CD8-positive, alpha-beta T cell (primary cell): ENCODE measurements at regions of chr4 and their contacts with region 1.

Region 1: DNA sequence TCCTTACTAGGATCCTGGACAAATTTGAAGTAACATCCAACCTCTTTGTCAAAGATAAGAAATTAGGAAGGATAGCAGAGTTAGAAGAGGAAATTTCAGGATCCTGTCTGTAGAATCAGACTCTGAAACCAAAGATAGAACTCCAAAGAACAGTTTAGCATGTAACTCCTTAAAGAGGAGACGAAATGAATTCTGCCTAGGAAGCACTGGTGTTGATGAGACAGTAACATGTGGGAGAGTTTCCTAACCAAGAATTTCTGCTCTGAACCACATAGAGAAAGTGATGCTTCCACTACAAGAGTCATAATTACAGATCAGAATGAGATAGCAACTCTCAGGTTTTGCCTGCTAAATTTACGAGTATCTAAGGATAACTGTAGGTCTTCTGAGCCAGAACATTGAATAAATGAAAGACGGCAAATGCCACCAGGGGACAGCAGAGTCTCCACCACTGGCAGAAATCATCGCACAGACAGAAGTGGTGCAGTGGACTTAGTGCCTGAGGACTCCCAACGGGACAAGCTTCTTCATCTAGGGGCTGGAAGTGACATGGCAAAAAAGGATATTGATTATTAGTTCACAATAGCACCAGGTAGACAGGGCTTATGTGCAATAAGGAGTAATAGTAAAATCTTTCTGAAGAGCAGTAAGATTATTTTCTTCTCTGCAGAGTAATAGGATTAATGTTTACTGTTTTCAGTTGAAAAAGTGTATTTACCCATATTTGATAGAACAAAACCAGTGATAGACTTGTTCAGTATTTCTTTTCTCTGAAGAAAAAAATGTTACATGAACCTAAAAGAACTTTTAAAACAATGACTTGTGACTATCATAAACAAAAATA is 6.7 kb upstream of the PPID start:
- DNase-seq: peak; percentile 22 to 74 (median 51)
- ATAC-seq: peak; percentile 80
- H3K4me3 ChIP-seq: no peak overlapping the region
- H3K4me3 Mint-ChIP-seq: no peak overlapping the region
- H3K27ac ChIP-seq: no peak overlapping the region
- H3K27ac Mint-ChIP-seq: no peak overlapping the region
- H3K4me1 ChIP-seq: no peaks in the 10 kb centered on the region
- H3K4me1 Mint-ChIP-seq: peaks cover 2% of the 10 kb centered on the region
- H3K27me3 ChIP-seq: peaks cover 0 to 5% of the 10 kb centered on the region in 2 experiments
- H3K27me3 Mint-ChIP-seq: peaks cover 37% of the 10 kb centered on the region
- CTCF ChIP-seq: peak; percentile 72

Region 2: GRCh38 chr4:158845311-158846041 is 115.5 kb after region 1 on chr4:
- CTCF ChIA-PET with region 1: interaction called, 15 read pairs
- POLR2A ChIA-PET with region 1: no interaction called
- intact Hi-C with region 1: loop called in 1 of 2 experiments (anchors 1 kb)
- DNase-seq: no peak
- ATAC-seq: no peak
- H3K4me3 ChIP-seq: no peak overlapping the region
- H3K4me3 Mint-ChIP-seq: no peak overlapping the region
- H3K27ac ChIP-seq: no peak overlapping the region
- H3K27ac Mint-ChIP-seq: no peak overlapping the region
- H3K4me1 ChIP-seq: no peaks in the 10 kb centered on the region
- H3K4me1 Mint-ChIP-seq: peaks cover 2% of the 10 kb centered on the region
- H3K27me3 ChIP-seq: no peaks in the 10 kb centered on the region
- H3K27me3 Mint-ChIP-seq: no peaks in the 10 kb centered on the region
- CTCF ChIP-seq: no peak

Region 3: GRCh38 chr4:158850800-158851644 is 121.1 kb after region 1 on chr4:
- CTCF ChIA-PET with region 1: interaction called, 15 read pairs
- POLR2A ChIA-PET with region 1: no interaction called
- intact Hi-C with region 1: loop called (anchors 1 kb)
- DNase-seq: peak in 2 of 9 experiments; percentile 38 to 55
- ATAC-seq: peak; percentile 38
- H3K4me3 ChIP-seq: no peak overlapping the region
- H3K4me3 Mint-ChIP-seq: no peak overlapping the region
- H3K27ac ChIP-seq: no peak overlapping the region
- H3K27ac Mint-ChIP-seq: no peak overlapping the region
- H3K4me1 ChIP-seq: no peaks in the 10 kb centered on the region
- H3K4me1 Mint-ChIP-seq: peaks cover 5% of the 10 kb centered on the region
- H3K27me3 ChIP-seq: no peaks in the 10 kb centered on the region
- H3K27me3 Mint-ChIP-seq: no peaks in the 10 kb centered on the region
- CTCF ChIP-seq: peak; percentile 74

Region 4: DNA sequence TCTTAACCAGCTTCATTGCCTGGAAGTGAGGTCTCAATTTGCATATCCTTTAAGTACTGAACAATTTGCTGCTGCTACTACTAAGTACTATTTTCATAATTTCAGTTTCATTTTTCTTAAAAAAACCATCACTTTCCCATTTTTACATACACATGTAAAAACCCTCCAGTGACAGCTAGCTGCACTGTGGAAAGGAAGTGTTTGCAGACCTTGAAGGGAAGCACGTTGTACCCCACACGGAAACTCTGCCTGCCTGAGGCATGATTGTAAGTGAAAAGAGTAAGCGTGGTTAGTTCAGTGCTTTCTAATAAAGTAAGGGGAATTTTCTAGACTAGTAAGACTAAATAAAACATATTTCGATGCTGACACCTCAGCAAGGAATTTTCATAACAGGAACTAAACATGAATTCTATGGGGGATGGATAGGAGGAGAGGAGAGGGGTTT is 476.5 kb after region 1 on chr4:
- CTCF ChIA-PET with region 1: interaction called, 3 read pairs
- POLR2A ChIA-PET with region 1: no interaction called
- intact Hi-C with region 1: loop called (anchors 1 to 2 kb)
- DNase-seq: peak in 1 of 9 experiments; percentile 41
- ATAC-seq: peak; percentile 36
- H3K4me3 ChIP-seq: no peak overlapping the region
- H3K4me3 Mint-ChIP-seq: no peak overlapping the region
- H3K27ac ChIP-seq: no peak overlapping the region
- H3K27ac Mint-ChIP-seq: no peak overlapping the region
- H3K4me1 ChIP-seq: no peaks in the 10 kb centered on the region
- H3K4me1 Mint-ChIP-seq: peaks cover 18% of the 10 kb centered on the region
- H3K27me3 ChIP-seq: no peaks in the 10 kb centered on the region
- H3K27me3 Mint-ChIP-seq: no peaks in the 10 kb centered on the region
- CTCF ChIP-seq: no peak

Region 5: DNA sequence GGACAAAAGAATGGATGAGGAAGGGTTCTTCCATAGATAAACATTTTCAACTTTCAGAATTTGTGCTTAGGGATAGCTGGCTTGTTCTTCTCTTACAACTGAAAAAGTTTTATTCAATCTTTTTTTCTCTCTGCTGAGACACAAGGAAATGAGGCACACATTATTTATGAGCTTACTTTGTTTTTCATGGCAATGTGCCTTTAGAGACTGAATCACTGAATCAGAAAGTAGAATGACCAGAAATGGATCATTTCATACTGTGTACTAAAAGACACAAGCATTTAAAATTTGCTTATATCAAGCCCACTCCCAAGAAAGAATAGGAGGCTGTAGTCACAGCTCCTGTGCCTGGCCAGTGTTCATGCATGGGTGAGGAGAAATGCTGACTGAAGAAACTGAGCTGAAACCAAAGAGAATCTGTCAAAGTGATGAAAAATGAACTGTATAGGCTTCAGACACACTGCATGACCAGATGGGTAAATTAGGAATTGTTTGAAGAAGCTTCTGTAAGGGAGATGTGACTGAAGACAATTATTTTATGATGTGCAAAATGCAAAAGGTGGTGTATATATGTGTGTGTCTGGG is 786.7 kb after region 1 on chr4:
- CTCF ChIA-PET with region 1: no interaction called
- POLR2A ChIA-PET with region 1: no interaction called
- intact Hi-C with region 1: no loop called
- DNase-seq: no peak
- ATAC-seq: no peak
- H3K4me3 ChIP-seq: no peak overlapping the region
- H3K4me3 Mint-ChIP-seq: no peak overlapping the region
- H3K27ac ChIP-seq: no peak overlapping the region
- H3K27ac Mint-ChIP-seq: no peak overlapping the region
- H3K4me1 ChIP-seq: no peaks in the 10 kb centered on the region
- H3K4me1 Mint-ChIP-seq: no peaks in the 10 kb centered on the region
- H3K27me3 ChIP-seq: no peaks in the 10 kb centered on the region
- H3K27me3 Mint-ChIP-seq: peaks cover 4% of the 10 kb centered on the region
- CTCF ChIP-seq: no peak